ENCODE measurements at regions of chr6 and their contacts with region 1.

Region 1: GRCh38 chr6:150417899-150418826 is 49.4 kb downstream of the IYD start:
- DNase-seq: peak; percentile 44 to 53 (median 51)
- H3K4me3 ChIP-seq: peak overlapping the region; percentile 8 to 25
- H3K4me3 Mint-ChIP-seq: peak overlapping the region; percentile 69 to 89 (median 78)
- H3K27ac ChIP-seq: no peak overlapping the region
- H3K27ac Mint-ChIP-seq: peak overlapping the region in 2 of 7 donors; percentile 0 to 19
- H3K4me1 ChIP-seq: peaks cover 9% of the 10 kb centered on the region
- H3K4me1 Mint-ChIP-seq: peaks cover 4 to 22% (median 14%) of the 10 kb centered on the region in 4 donors
- H3K27me3 ChIP-seq: no peaks in the 10 kb centered on the region
- H3K27me3 Mint-ChIP-seq: peaks cover 12 to 21% of the 10 kb centered on the region in 2 donors

Region 2: DNA sequence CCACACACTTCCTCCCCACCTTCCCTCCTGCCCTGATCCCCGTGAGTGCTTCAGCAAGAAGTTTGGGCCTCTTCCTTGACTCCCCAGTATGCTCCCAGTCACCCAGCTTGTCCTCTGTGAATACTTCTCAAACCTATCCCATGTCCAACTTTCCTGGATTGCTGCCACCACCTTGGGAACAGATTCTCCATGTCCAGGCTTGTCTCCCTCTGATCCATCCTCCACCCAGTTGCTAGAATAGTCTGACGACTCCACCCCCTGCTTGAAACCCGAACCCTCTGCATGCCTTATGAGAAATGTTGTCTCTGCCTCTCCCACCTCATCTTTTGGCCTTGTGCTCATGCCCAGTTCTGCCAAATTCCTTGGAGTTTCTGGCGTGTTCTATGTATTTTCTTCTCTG is 167.3 kb before region 1 on chr6:
- CTCF ChIA-PET with region 1: no interaction called
- POLR2A ChIA-PET with region 1: no interaction called
- intact Hi-C with region 1: no loop called
- DNase-seq: no peak
- H3K4me3 ChIP-seq: no peak overlapping the region
- H3K4me3 Mint-ChIP-seq: no peak overlapping the region
- H3K27ac ChIP-seq: no peak overlapping the region
- H3K27ac Mint-ChIP-seq: peak overlapping the region in 1 of 7 donors; percentile 65
- H3K4me1 ChIP-seq: no peaks in the 10 kb centered on the region
- H3K4me1 Mint-ChIP-seq: no peaks in the 10 kb centered on the region
- H3K27me3 ChIP-seq: no peaks in the 10 kb centered on the region
- H3K27me3 Mint-ChIP-seq: peaks cover 2 to 4% of the 10 kb centered on the region in 2 donors

Region 3: DNA sequence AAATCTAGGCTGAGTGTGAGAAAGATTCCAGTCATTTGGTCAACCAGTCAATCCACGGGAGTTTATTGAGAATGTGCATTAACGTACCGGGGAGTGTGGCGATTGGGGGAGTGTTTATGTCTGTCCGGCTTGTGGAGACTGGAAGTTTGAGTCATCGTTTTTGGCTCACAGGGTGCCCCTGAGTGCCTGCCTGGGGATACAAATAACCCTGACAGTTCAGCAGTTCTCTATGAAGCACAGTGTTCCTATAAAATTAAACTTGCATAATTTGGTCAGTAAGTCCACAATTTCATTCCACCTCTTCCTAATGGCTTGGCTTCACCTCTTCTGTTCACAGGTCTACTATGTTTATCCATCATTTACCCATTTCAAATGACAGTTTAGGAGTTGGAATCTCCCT is 108.9 kb after region 1 on chr6:
- CTCF ChIA-PET with region 1: no interaction called
- POLR2A ChIA-PET with region 1: no interaction called
- intact Hi-C with region 1: no loop called
- DNase-seq: no peak
- H3K4me3 ChIP-seq: no peak overlapping the region
- H3K4me3 Mint-ChIP-seq: no peak overlapping the region
- H3K27ac ChIP-seq: no peak overlapping the region
- H3K27ac Mint-ChIP-seq: no peak overlapping the region
- H3K4me1 ChIP-seq: no peaks in the 10 kb centered on the region
- H3K4me1 Mint-ChIP-seq: peaks cover 0 to 1% (median 0%) of the 10 kb centered on the region in 4 donors
- H3K27me3 ChIP-seq: no peaks in the 10 kb centered on the region
- H3K27me3 Mint-ChIP-seq: peaks cover 4 to 10% of the 10 kb centered on the region in 2 donors

Region 4: DNA sequence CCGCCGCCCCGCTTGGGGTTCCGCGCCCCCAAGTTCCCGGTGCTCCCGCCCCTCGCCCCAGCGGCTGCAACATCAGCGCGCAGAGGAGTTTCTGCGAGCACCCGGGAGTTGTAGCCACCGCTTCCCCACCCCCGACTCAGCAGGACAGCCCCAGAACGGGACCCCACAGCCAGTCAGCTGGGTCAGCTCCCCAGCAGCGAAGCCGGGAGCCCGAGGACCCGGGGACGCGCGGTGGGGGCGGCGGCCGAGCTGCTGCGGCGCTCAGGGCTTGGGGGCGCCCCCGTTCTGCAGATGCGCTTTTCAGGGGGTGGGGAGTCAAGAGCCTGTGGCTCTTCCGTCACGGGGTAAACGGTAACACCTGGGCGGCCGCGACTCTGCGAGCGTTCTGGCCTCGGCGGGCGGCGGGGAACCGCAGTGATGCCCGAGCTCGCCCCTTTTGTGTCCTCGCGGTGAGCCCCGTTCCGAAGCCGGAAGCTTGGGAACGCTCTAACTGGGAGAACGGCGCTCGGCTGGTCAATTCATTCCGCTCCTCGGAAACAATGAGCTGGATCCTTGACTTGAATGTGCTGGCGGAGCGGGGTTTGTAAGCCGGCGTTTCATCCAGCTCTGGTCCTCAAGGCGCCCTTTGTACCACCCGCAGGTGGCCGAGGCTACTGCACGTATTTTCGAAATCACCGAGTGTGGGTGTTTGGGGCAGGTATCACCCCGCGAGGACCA is 182.3 kb after region 1 on chr6:
- CTCF ChIA-PET with region 1: interaction called, 10 read pairs
- POLR2A ChIA-PET with region 1: no interaction called
- intact Hi-C with region 1: loop called (anchors 1 kb)
- DNase-seq: peak; percentile 54 to 73 (median 68)
- H3K4me3 ChIP-seq: peak overlapping the region in 1 of 2 donors; percentile 50
- H3K4me3 Mint-ChIP-seq: peak overlapping the region; percentile 89 to 98 (median 94)
- H3K27ac ChIP-seq: peak overlapping the region; percentile 40
- H3K27ac Mint-ChIP-seq: peak overlapping the region; percentile 75 to 94 (median 92)
- H3K4me1 ChIP-seq: peaks cover 14% of the 10 kb centered on the region
- H3K4me1 Mint-ChIP-seq: peaks cover 13 to 20% (median 15%) of the 10 kb centered on the region in 4 donors
- H3K27me3 ChIP-seq: no peaks in the 10 kb centered on the region
- H3K27me3 Mint-ChIP-seq: peaks cover 20 to 23% of the 10 kb centered on the region in 2 donors

Region 5: DNA sequence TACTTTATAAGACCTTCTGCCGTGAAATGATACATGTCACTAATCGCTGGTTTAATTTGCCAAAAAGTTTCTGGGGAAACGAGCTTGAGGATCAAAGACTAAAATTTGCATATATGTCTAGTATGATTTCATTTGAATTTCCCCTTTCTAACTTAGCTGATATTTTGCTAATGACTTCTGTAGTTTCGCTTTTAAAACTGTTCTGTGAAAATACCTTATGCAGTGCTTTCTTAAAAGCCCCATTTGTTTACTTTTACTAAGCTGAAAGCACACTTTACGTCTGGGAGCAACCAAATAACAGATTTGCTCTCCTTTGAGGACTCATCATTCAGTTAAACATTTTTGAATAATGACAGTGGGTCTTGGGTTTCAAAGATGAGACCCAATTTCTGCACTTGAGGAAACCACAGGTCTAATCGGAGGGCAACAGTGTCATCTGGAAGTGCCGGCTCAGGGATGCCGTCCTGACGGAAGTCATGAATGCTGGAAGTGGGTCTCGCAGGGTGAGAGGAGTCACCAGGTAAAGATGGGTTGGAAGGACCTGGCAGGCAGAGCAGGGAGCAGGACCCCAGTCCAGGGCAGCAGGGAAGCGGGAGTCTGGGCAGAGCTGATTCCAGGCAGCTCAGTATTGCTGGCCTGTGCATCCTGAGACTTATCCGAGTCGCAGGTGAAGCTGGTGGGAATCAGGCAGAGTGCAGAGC is 214.8 kb after region 1 on chr6:
- CTCF ChIA-PET with region 1: no interaction called
- POLR2A ChIA-PET with region 1: no interaction called
- intact Hi-C with region 1: no loop called
- DNase-seq: peak in 1 of 5 donors; percentile 15
- H3K4me3 ChIP-seq: peak overlapping the region in 1 of 2 donors; percentile 41
- H3K4me3 Mint-ChIP-seq: peak overlapping the region; percentile 74 to 88 (median 84)
- H3K27ac ChIP-seq: peak overlapping the region; percentile 60
- H3K27ac Mint-ChIP-seq: peak overlapping the region; percentile 44 to 86 (median 79)
- H3K4me1 ChIP-seq: peaks cover 43% of the 10 kb centered on the region
- H3K4me1 Mint-ChIP-seq: peaks cover 26 to 50% (median 42%) of the 10 kb centered on the region in 4 donors
- H3K27me3 ChIP-seq: no peaks in the 10 kb centered on the region
- H3K27me3 Mint-ChIP-seq: peaks cover 4 to 5% of the 10 kb centered on the region in 2 donors

Region 6: GRCh38 chr6:150741633-150742504 is 323.7 kb after region 1 on chr6:
- CTCF ChIA-PET with region 1: interaction called, 16 read pairs
- POLR2A ChIA-PET with region 1: no interaction called
- intact Hi-C with region 1: loop called (anchors 1 kb)
- DNase-seq: peak in 1 of 5 donors; percentile 6
- H3K4me3 ChIP-seq: no peak overlapping the region
- H3K4me3 Mint-ChIP-seq: no peak overlapping the region
- H3K27ac ChIP-seq: no peak overlapping the region
- H3K27ac Mint-ChIP-seq: no peak overlapping the region
- H3K4me1 ChIP-seq: no peaks in the 10 kb centered on the region
- H3K4me1 Mint-ChIP-seq: no peaks in the 10 kb centered on the region
- H3K27me3 ChIP-seq: no peaks in the 10 kb centered on the region
- H3K27me3 Mint-ChIP-seq: peaks cover 0 to 1% of the 10 kb centered on the region in 2 donors

Measured in CD4-positive, alpha-beta memory T cell (primary cell).